GM12878 (cell line): ENCODE measurements at regions of chr12 and their contacts with region 1.

Region 1: DNA sequence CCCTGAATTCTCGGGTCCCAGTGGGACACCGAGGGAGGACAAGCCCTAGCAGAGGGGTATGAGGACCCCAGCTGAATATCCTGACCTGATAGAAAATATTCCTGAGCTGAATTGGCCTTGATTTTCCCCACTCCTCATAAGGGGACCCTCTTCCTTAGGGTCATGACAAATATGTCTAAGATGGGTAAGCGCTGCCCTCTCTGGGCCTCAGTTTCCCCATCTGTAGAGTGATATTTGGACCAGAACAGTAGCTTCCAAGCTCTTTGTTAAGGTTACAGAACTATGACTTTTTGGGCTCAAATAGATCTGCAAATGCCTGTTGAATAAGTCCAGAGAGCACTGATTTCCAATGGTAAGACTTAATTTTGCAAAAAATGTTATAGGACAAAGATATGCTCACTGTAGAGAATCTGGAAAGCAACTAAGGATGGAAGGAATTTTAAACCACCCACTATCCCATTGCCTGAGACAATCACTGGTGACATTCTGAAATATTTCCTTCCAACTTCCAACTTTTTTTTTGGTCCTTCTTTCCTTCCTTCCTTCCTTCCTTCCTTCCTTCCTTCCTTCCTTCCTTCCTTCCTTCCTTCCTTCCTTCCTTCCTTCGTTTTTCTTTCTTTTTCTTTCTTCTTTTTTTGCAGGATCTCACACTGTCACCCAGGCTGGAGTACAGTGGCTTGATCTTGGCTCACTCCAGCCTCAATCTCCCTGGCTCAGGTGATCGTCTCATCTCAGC is 32.0 kb downstream of the MYL2 start:
- DNase-seq: no peak
- ATAC-seq: no peak
- H3K4me3 ChIP-seq: no peak overlapping the region
- H3K27ac ChIP-seq: no peak overlapping the region
- H3K4me1 ChIP-seq: no peaks in the 10 kb centered on the region
- H3K27me3 ChIP-seq: no peaks in the 10 kb centered on the region; a peak in 1 of 4 replicates
- CTCF ChIP-seq: no peak
- EP300 ChIP-seq: no peak
- POLR2A ChIP-seq: no peak
- RAD21 ChIP-seq: no peak

Region 2: DNA sequence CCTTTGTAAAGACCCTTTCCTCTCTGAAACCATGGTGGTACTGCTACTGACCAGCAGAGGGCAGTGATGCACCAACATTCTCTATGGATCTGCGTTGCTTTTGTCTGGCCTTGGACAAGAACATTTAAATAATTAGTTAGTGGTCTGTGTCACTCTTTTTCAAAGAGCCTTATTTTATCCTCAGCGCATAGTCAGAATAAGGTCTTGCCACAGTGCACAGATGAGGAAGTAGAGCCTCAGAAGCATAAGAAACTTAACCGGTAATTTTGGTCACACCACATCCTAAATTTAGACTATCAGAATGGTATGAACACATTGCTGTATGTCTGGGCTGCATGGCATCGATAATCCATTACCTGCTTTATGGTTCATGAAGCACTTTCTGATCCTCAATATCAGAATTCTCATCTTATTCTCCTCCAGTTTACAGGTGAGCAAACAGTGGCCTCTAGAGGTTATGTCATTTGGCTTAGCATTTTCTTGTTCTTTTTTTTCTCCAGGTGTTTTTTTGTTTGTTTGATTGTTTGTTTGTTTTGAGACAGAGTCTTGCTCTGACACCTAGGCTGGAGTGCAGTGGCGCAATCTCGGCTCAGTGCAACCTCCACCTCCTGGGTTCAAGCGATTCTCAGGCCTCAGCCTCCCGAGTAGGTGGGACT is 788.0 kb before region 1 on chr12:
- CTCF ChIA-PET with region 1: interaction called, 4 read pairs
- POLR2A ChIA-PET with region 1: no interaction called
- RAD21 ChIA-PET with region 1: no interaction called
- SMC1A ChIA-PET with region 1: no interaction called
- in situ Hi-C with region 1: no loop called
- intact Hi-C with region 1: loop called (anchors 5 kb)
- DNase-seq: peak; percentile 93
- ATAC-seq: peak; percentile 93
- H3K4me3 ChIP-seq: no peak overlapping the region
- H3K27ac ChIP-seq: peak overlapping the region; percentile 49
- H3K4me1 ChIP-seq: peaks cover 9% of the 10 kb centered on the region; the same call in 1 of the 2 replicates
- H3K27me3 ChIP-seq: no peaks in the 10 kb centered on the region
- CTCF ChIP-seq: peak; percentile 85 to 92 (median 85)
- EP300 ChIP-seq: peak in 1 of 2 experiments; percentile 30; a peak in 1 of 4 replicates
- POLR2A ChIP-seq: no peak
- RAD21 ChIP-seq: peak; percentile 96

Region 3: DNA sequence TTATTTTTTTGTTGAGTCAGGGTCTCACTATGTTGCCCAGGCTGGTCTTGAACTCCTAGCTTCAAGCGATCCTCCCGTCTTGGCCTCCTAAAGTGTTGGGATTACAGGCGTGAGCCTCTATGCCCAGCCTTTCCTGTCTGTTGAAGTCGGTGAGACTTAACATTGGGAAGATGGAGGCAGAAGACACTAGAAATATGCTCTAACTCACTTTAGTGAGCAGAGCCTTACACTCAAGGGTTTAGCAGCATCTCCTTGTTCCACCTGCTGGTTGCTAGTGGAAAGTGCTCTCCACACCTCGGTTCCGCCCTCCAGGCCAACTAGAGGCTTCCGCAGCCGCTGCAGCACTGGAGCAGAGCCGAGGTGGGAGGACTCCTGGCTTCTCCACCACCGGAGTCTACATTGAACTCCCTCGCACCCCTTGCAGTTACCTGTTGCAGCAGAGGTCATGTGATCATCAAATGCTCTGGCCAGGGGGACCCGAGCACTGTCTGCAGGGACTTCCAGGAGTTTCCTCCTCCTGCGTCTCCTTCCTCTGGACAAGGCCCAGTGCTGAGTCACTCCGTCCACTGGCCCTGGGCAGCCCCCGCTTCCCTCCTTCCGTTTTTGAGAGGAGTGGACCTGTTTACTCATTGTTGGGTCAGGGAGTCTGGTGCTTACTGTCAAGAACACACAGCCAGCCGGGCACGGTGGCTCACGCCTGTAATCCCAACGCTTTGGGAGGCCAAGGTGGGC is 190.1 kb before region 1 on chr12:
- CTCF ChIA-PET with region 1: interaction called, 5 read pairs
- POLR2A ChIA-PET with region 1: no interaction called
- RAD21 ChIA-PET with region 1: interaction called, 4 read pairs
- SMC1A ChIA-PET with region 1: no interaction called
- in situ Hi-C with region 1: no loop called
- intact Hi-C with region 1: loop called (anchors 5 kb)
- DNase-seq: peak; percentile 90
- ATAC-seq: peak; percentile 99
- H3K4me3 ChIP-seq: no peak overlapping the region
- H3K27ac ChIP-seq: peak overlapping the region; percentile 64
- H3K4me1 ChIP-seq: peaks cover 29% of the 10 kb centered on the region
- H3K27me3 ChIP-seq: no peaks in the 10 kb centered on the region
- CTCF ChIP-seq: peak; percentile 88 to 90 (median 89)
- EP300 ChIP-seq: no peak
- POLR2A ChIP-seq: no peak
- RAD21 ChIP-seq: peak; percentile 92